ENCODE measurements at regions of chr12 and their contacts with region 1.

Region 1: GRCh38 chr12:122646517-122647217 is 56.5 kb downstream of the HCAR2 start:
- DNase-seq: peak in 1 of 2 donors; percentile 21
- H3K4me3 ChIP-seq: no peak overlapping the region
- H3K27ac ChIP-seq: peak overlapping the region in 1 of 5 donors; percentile 7
- H3K4me1 ChIP-seq: peaks cover 0 to 7% (median 0%) of the 10 kb centered on the region in 4 donors
- H3K27me3 ChIP-seq: no peaks in the 10 kb centered on the region
- CTCF ChIP-seq: no peak
- EP300 ChIP-seq: no peak
- POLR2A ChIP-seq: no peak

Region 2: GRCh38 chr12:122752464-122753318 is 106.0 kb after region 1 on chr12 and contains the start of gene DENR:
- intact Hi-C with region 1: loop called (anchors 5 kb)
- DNase-seq: peak; percentile 99
- H3K4me3 ChIP-seq: peak within 1 kb of the TSS; percentile 69 to 93 (median 82)
- H3K27ac ChIP-seq: peak within 1 kb of the TSS; percentile 78 to 89 (median 85)
- H3K4me1 ChIP-seq: peaks cover 12 to 40% (median 22%) of the 10 kb centered on the region in 4 donors
- H3K27me3 ChIP-seq: no peaks in the 10 kb centered on the region
- CTCF ChIP-seq: peak in 5 of 7 experiments; percentile 66 to 99 (median 81)
- EP300 ChIP-seq: no peak
- POLR2A ChIP-seq: peak in 1 of 4 donors; percentile 66
- total RNA-seq, gene DENR: 4.1 to 36.0 (median 18.8) TPM

Measured in stomach (tissue), 19 donors.